Activated CD4-positive, alpha-beta memory T cell treated with anti-CD3 and anti-CD28 coated beads for 36 hours (primary cell): ENCODE measurements at regions of chr1 and their contacts with region 1.

Region 1: DNA sequence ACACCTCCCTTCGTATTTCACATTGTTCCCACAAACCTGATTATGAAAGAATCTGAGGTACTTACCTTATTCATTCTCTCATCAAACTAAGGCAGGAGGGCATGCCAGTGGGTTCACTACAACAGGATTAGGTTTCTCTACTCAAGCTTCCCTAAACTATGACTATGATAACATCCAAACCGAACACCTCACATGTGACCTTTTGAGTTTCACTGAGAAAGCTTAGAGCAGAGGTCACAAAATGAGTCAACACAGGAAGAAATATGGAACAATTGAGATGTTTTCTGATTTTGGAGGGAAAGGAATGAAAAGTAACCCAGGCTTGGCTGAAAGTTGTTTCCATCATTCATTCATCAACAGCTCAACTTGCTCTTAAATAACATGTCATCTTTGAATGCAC is 24.1 kb downstream of the UBR4 start:
- DNase-seq: peak; percentile 13
- H3K4me3 Mint-ChIP-seq: no peak overlapping the region
- H3K27ac Mint-ChIP-seq: peak overlapping the region; percentile 57
- H3K4me1 Mint-ChIP-seq: peaks cover 23% of the 10 kb centered on the region
- H3K27me3 Mint-ChIP-seq: no peaks in the 10 kb centered on the region

Region 2: DNA sequence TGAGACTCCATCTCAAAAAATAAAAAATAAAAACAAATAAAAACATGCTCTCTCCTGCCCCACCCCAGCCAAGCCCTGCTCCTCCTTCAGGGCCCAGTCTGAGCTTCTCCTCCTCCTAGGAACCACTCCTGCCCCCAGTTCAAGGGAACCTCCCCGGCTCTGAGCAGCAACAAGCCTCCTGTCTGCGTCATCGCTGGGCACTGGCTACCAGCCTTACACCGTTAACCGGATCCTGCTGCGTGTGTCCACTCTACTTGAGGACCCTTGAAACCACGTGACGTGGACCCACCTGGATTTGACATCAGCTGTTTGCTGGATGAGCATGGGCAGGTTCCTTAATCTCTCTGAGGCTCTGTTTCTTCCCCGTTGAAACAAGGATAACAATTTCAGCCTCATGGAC is 324.9 kb before region 1 on chr1:
- CTCF ChIA-PET with region 1: no interaction called
- POLR2A ChIA-PET with region 1: no interaction called
- intact Hi-C with region 1: no loop called
- DNase-seq: no peak
- H3K4me3 Mint-ChIP-seq: no peak overlapping the region
- H3K27ac Mint-ChIP-seq: no peak overlapping the region
- H3K4me1 Mint-ChIP-seq: no peaks in the 10 kb centered on the region
- H3K27me3 Mint-ChIP-seq: peaks cover 2% of the 10 kb centered on the region

Region 3: DNA sequence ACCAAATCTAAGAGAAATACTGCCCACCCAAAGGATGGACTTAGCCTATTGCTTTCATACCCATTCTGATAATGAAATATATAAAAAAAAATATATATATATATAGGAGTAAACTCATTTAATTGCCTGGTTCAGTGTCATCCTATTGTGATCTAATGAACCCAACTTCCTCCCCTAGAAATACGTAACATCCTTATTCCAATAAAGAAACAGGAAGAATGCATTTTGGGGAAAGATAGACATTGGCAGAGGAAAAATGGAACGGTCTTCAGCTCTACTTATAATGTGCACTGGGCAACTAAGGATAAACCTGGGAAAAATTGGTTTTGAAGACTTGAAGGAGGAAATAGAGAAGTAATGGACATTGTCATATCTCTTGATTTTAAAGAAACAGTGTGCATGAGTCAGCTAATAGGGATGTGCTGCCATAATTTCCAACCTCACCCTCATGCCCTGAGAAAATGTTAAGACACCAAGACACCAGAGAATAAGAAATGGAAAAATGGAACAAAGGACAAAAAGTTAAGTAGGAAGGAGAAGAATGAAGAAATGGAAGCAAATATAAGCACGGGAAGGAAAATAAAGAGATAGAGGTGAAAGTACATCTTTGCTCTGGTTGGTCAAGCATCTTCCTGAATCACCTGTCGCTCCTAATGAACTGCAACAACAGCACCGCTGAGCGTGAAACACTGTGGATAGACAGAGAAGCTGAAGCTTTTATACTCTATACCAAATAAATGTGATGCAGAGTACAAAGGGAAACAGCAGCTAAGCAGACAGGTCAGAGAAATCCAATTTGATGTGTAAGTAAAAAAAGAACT is 18.7 kb after region 1 on chr1:
- CTCF ChIA-PET with region 1: interaction called, 6 read pairs
- POLR2A ChIA-PET with region 1: interaction called, 3 read pairs
- intact Hi-C with region 1: loop called (anchors 1 kb)
- DNase-seq: no peak
- H3K4me3 Mint-ChIP-seq: no peak overlapping the region
- H3K27ac Mint-ChIP-seq: no peak overlapping the region
- H3K4me1 Mint-ChIP-seq: peaks cover 64% of the 10 kb centered on the region
- H3K27me3 Mint-ChIP-seq: no peaks in the 10 kb centered on the region